HAP-1 (cell line): ENCODE measurements at regions of chr7 and their contacts with region 1.

Region 1: GRCh38 chr7:85554236-85555178 is 367.7 kb upstream of the SEMA3D start:
- DNase-seq: peak; percentile 20 to 49
- H3K4me3 ChIP-seq: no peak overlapping the region
- H3K4me1 ChIP-seq: no peaks in the 10 kb centered on the region
- H3K27me3 ChIP-seq: no peaks in the 10 kb centered on the region

Region 2: GRCh38 chr7:85041605-85042216 is 512.8 kb before region 1 on chr7:
- in situ Hi-C with region 1: loop called (anchors 25 kb)
- DNase-seq: peak; percentile 67 to 86
- H3K4me3 ChIP-seq: no peak overlapping the region
- H3K4me1 ChIP-seq: no peaks in the 10 kb centered on the region
- H3K27me3 ChIP-seq: no peaks in the 10 kb centered on the region